IMR-90 (cell line): ENCODE measurements at regions of chr10 and their contacts with region 1.

Region 1: DNA sequence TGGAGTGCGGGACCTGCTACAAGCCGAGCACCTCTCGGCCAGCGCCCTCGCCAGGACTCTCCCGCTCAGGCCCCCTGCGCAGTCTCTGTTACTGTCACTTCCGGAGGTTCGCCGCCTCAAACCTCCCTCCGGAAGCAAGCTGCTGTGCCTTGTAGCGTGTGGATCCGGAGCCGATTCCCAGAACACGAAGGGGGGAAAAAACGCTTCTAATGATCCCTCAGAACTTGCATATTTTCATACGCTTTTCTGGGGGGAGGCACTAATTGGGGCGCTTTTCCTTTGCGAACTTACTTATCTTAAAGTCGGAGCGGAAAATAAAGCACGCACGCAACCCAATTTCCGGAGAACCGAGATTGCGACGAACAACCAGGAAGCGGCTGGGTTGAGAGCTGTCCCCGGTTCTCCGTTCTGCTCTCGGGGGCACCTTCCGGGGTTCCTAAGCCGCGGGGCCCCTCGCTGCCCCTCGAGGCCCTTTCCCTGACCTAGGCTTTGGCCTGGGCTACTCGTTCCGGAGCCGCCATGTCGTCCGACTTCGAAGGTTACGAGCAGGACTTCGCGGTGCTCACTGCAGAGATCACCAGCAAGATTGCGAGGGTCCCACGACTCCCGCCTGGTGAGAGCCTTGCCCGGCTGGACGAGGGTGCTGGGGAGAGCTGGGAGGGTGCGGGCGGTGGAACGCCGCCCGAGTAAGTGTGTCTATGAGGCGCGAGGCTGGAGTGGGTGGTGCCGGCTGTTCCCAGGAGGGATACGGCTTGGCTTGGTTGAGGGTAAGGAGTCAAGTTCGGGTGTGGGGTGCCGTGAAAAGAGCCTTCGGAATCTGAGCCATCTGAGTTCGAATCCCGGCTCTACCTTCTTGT is at the starts of genes VTI1A and ZDHHC6:
- DNase-seq: peak; percentile 84
- ATAC-seq: peak; percentile 96
- H3K4me3 ChIP-seq: peak within 1 kb of the TSS; percentile 95
- H3K27ac ChIP-seq: peak within 1 kb of the TSS; percentile 92
- H3K4me1 ChIP-seq: no peaks in the 10 kb centered on the region
- H3K27me3 ChIP-seq: no peaks in the 10 kb centered on the region
- CTCF ChIP-seq: peak; percentile 24; the same call in 1 of the 2 replicates
- POLR2A ChIP-seq: peak; percentile 67; the same call in 1 of the 2 replicates
- RAD21 ChIP-seq: 0 out of 2 replicates have a peak, but pooled peaks have one; percentile 10
- total RNA-seq, gene VTI1A: 24.9 and 35.0 TPM in 2 replicates
- total RNA-seq, gene ZDHHC6: 17.4 and 22.2 TPM in 2 replicates

Region 2: DNA sequence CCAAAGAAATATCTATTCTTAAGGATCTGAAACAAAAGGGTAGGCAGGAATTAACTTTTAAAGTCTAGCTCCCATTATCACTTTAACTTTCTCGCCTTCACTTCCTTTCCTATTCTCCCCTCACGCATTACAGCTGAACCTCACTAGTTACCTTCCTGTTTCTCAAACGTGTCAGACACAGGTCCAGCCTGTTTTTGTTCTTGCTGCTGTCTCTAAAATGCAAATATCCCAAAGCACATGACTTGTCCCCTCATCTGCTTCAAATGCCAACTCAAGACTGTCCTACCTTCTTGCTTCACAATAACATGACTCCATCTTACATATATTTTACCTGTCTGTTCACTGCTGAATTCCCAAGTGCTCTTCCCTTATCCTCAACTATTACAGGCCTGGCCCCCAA is 17.9 kb before region 1 on chr10:
- CTCF ChIA-PET with region 1: no interaction called
- POLR2A ChIA-PET with region 1: interaction called, 10 read pairs
- dilution Hi-C with region 1: no loop called
- in situ Hi-C with region 1: no loop called
- intact Hi-C with region 1: no loop called
- DNase-seq: no peak
- ATAC-seq: no peak
- H3K4me3 ChIP-seq: no peak overlapping the region
- H3K27ac ChIP-seq: no peak overlapping the region
- H3K4me1 ChIP-seq: no peaks in the 10 kb centered on the region
- H3K27me3 ChIP-seq: no peaks in the 10 kb centered on the region
- CTCF ChIP-seq: no peak
- POLR2A ChIP-seq: no peak
- RAD21 ChIP-seq: no peak